ENCODE measurements at regions of chr3 and their contacts with region 1.

Region 1: GRCh38 chr3:134308350-134308891 is 57.8 kb upstream of the RYK start:
- DNase-seq: peak; percentile 75 to 85 (median 81)
- ATAC-seq: peak; percentile 63 to 75 (median 68)
- H3K4me3 ChIP-seq: peak overlapping the region in 4 of 12 donors; percentile 26 to 39 (median 36)
- H3K27ac ChIP-seq: peak overlapping the region in 11 of 12 donors; percentile 19 to 82 (median 72)
- H3K4me1 ChIP-seq: peaks cover 2 to 34% (median 23%) of the 10 kb centered on the region in 12 donors
- H3K27me3 ChIP-seq: peaks cover 0 to 4% (median 0%) of the 10 kb centered on the region in 9 donors
- CTCF ChIP-seq: peak; percentile 97 to 100 (median 99)
- POLR2A ChIP-seq: no peak

Region 2: GRCh38 chr3:133943639-133944141 is 364.7 kb before region 1 on chr3:
- intact Hi-C with region 1: no loop called
- DNase-seq: no peak
- ATAC-seq: peak in 2 of 4 donors; percentile 4 to 23
- H3K4me3 ChIP-seq: no peak overlapping the region
- H3K27ac ChIP-seq: peak overlapping the region in 6 of 12 donors; percentile 6 to 77 (median 50)
- H3K4me1 ChIP-seq: peaks cover 0 to 59% (median 27%) of the 10 kb centered on the region in 12 donors
- H3K27me3 ChIP-seq: no peaks in the 10 kb centered on the region
- CTCF ChIP-seq: no peak
- POLR2A ChIP-seq: no peak

Region 3: GRCh38 chr3:134357261-134358184 is 49.1 kb after region 1 on chr3:
- intact Hi-C with region 1: loop called in 2 of 10 experiments (anchors 5 kb)
- DNase-seq: peak in 1 of 5 donors; percentile 42
- ATAC-seq: peak; percentile 12 to 51 (median 39)
- H3K4me3 ChIP-seq: no peak overlapping the region
- H3K27ac ChIP-seq: peak overlapping the region; percentile 34 to 100 (median 71)
- H3K4me1 ChIP-seq: peaks cover 10 to 99% (median 70%) of the 10 kb centered on the region in 12 donors
- H3K27me3 ChIP-seq: no peaks in the 10 kb centered on the region
- CTCF ChIP-seq: no peak
- POLR2A ChIP-seq: no peak

Region 4: GRCh38 chr3:134364061-134364935 is 55.9 kb after region 1 on chr3:
- intact Hi-C with region 1: loop called in 3 of 10 experiments (anchors 2 to 5 kb)
- DNase-seq: peak; percentile 94 to 97 (median 94)
- ATAC-seq: peak; percentile 88 to 89 (median 89)
- H3K4me3 ChIP-seq: peak overlapping the region in 10 of 12 donors; percentile 10 to 49 (median 35)
- H3K27ac ChIP-seq: peak overlapping the region; percentile 75 to 100 (median 98)
- H3K4me1 ChIP-seq: peaks cover 34 to 100% (median 96%) of the 10 kb centered on the region in 12 donors
- H3K27me3 ChIP-seq: no peaks in the 10 kb centered on the region
- CTCF ChIP-seq: no peak
- POLR2A ChIP-seq: no peak

Region 5: DNA sequence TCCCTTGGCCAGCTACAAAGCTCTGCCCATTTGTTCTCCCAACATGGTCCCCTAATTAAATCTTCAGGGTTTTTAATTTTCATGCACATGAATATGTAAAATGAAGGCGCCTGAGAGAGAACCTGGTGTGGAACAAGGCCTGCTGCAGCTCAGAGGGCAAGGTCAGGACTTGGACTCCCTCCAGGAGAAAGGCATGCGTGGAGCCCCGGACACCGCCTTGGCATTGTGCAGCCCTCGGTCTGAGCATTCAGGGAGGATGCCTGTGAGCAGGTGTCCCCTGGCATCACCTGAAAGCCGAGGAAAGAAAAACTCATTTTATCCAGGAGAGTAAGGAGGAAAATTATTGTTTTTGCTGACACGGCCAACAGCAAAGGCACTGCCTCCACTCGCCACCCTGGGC is 452.8 kb after region 1 on chr3:
- intact Hi-C with region 1: loop called in 1 of 10 experiments (anchors 10 kb)
- DNase-seq: peak in 1 of 5 donors; percentile 54
- ATAC-seq: peak in 3 of 4 donors; percentile 51 to 59 (median 53)
- H3K4me3 ChIP-seq: no peak overlapping the region
- H3K27ac ChIP-seq: no peak overlapping the region
- H3K4me1 ChIP-seq: no peaks in the 10 kb centered on the region
- H3K27me3 ChIP-seq: no peaks in the 10 kb centered on the region
- CTCF ChIP-seq: no peak
- POLR2A ChIP-seq: no peak

Measured in heart left ventricle (tissue), 16 donors.